ENCODE measurements at regions of chr3 and their contacts with region 1.

Region 1: GRCh38 chr3:123489400-123490004 is 40.6 kb upstream of the ADCY5 start:
- DNase-seq: peak; percentile 83
- H3K4me3 ChIP-seq: no peak overlapping the region
- H3K27ac ChIP-seq: no peak overlapping the region
- H3K4me1 ChIP-seq: no peaks in the 10 kb centered on the region
- H3K27me3 ChIP-seq: no peaks in the 10 kb centered on the region
- CTCF ChIP-seq: peak; percentile 93
- EP300 ChIP-seq: no peak
- RAD21 ChIP-seq: peak; percentile 98

Region 2: GRCh38 chr3:123319760-123320159 is 169.7 kb before region 1 on chr3:
- CTCF ChIA-PET with region 1: interaction called, 275 read pairs
- POLR2A ChIA-PET with region 1: no interaction called
- DNase-seq: peak; percentile 67
- H3K4me3 ChIP-seq: no peak overlapping the region
- H3K27ac ChIP-seq: no peak overlapping the region; a peak in 1 of 4 replicates
- H3K4me1 ChIP-seq: peaks cover 0 to 11% of the 10 kb centered on the region in 2 experiments; a peak in 1 of 4 replicates
- H3K27me3 ChIP-seq: peaks cover 57% of the 10 kb centered on the region
- CTCF ChIP-seq: no peak
- EP300 ChIP-seq: no peak
- RAD21 ChIP-seq: no peak

Region 3: DNA sequence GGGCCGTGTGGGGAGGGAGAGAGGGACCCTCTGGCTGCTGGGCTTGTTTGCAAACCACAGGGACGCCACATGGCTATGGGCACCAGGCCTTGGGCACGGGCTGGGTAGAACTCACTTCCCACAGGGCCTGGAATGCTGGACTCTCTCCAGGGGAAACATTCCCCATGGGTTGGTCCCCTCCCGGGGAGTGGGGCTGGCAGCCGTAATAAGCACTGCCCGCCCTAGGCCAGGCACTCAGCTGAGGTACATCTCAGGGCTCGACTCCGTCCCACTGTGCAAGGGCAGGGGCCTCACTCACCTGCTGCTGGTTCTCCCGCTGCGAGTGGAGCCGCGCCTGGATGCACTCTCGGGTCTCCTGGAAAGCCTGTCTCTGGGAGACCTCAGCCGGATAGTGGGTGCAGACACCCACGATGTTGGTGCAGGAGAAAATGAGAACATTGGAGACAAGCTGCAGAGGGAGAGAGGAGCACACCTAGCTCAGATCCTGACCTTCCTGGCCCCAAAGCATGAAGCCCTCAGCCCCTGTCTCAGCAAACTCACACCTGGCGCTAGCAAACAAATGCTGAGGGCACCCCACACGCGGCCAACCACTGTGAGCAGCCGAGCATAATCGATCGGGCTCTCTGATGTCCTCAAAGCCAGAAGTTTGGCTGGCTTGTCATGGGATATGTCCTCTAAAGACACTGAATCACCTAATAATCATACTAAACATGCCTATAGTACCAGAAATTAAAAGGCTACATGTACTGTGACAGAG is 137.2 kb before region 1 on chr3:
- CTCF ChIA-PET with region 1: interaction called, 11 read pairs
- POLR2A ChIA-PET with region 1: no interaction called
- DNase-seq: no peak
- H3K4me3 ChIP-seq: no peak overlapping the region
- H3K27ac ChIP-seq: no peak overlapping the region
- H3K4me1 ChIP-seq: no peaks in the 10 kb centered on the region; a peak in 1 of 4 replicates
- H3K27me3 ChIP-seq: peaks cover 35% of the 10 kb centered on the region
- CTCF ChIP-seq: no peak
- EP300 ChIP-seq: no peak
- RAD21 ChIP-seq: no peak

Region 4: GRCh38 chr3:123390865-123391600 is 98.5 kb before region 1 on chr3:
- CTCF ChIA-PET with region 1: interaction called, 10 read pairs
- POLR2A ChIA-PET with region 1: no interaction called
- DNase-seq: peak; percentile 71
- H3K4me3 ChIP-seq: no peak overlapping the region
- H3K27ac ChIP-seq: peak overlapping the region in 1 of 2 experiments; percentile 62; a peak in 1 of 4 replicates
- H3K4me1 ChIP-seq: peaks cover 0 to 29% of the 10 kb centered on the region in 2 experiments; a peak in 1 of 4 replicates
- H3K27me3 ChIP-seq: 0 out of 2 replicates have a peak, but pooled peaks cover 3% of the 10 kb centered on the region
- CTCF ChIP-seq: no peak
- EP300 ChIP-seq: no peak
- RAD21 ChIP-seq: no peak

Region 5: DNA sequence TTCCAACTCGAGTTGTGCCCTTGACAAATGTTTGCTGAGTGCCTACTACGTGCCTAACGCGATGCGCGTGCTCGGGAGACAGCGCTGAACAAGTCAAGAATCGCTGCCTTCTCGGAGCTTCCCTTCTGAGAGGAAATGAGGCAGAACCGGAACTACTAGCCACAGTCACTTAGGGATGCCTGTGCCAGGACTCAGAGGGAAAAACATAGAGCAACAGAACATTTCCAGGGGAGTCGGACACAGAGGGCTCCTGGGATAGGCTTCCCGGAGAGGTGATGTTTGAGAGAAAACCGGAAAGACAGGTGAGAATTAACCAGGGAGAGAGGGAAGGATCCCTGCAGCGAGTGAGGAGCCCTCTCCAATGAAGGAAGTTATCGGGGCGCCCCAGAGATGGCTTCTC is 14.2 kb before region 1 on chr3:
- CTCF ChIA-PET with region 1: interaction called, 10 read pairs
- POLR2A ChIA-PET with region 1: no interaction called
- DNase-seq: no peak
- H3K4me3 ChIP-seq: no peak overlapping the region
- H3K27ac ChIP-seq: no peak overlapping the region
- H3K4me1 ChIP-seq: no peaks in the 10 kb centered on the region
- H3K27me3 ChIP-seq: peaks cover 33% of the 10 kb centered on the region
- CTCF ChIP-seq: no peak
- EP300 ChIP-seq: no peak
- RAD21 ChIP-seq: no peak

Measured in SK-N-SH (cell line).